ENCODE measurements at regions of chr3 and their contacts with region 1.

Region 1: GRCh38 chr3:185332026-185332735 is 30.8 kb upstream of the MAP3K13 start:
- DNase-seq: no peak
- H3K4me3 Mint-ChIP-seq: peak overlapping the region; percentile 73
- H3K27ac Mint-ChIP-seq: peak overlapping the region; percentile 95
- H3K4me1 Mint-ChIP-seq: peaks cover 77% of the 10 kb centered on the region
- H3K27me3 Mint-ChIP-seq: no peaks in the 10 kb centered on the region
- CTCF ChIP-seq: no peak

Region 2: GRCh38 chr3:185316738-185317407 is 15.3 kb before region 1 on chr3:
- CTCF ChIA-PET with region 1: interaction called, 7 read pairs
- intact Hi-C with region 1: loop called (anchors 1 kb)
- DNase-seq: peak; percentile 62
- H3K4me3 Mint-ChIP-seq: peak overlapping the region; percentile 40
- H3K27ac Mint-ChIP-seq: peak overlapping the region; percentile 93
- H3K4me1 Mint-ChIP-seq: peaks cover 58% of the 10 kb centered on the region
- H3K27me3 Mint-ChIP-seq: no peaks in the 10 kb centered on the region
- CTCF ChIP-seq: no peak

Region 3: DNA sequence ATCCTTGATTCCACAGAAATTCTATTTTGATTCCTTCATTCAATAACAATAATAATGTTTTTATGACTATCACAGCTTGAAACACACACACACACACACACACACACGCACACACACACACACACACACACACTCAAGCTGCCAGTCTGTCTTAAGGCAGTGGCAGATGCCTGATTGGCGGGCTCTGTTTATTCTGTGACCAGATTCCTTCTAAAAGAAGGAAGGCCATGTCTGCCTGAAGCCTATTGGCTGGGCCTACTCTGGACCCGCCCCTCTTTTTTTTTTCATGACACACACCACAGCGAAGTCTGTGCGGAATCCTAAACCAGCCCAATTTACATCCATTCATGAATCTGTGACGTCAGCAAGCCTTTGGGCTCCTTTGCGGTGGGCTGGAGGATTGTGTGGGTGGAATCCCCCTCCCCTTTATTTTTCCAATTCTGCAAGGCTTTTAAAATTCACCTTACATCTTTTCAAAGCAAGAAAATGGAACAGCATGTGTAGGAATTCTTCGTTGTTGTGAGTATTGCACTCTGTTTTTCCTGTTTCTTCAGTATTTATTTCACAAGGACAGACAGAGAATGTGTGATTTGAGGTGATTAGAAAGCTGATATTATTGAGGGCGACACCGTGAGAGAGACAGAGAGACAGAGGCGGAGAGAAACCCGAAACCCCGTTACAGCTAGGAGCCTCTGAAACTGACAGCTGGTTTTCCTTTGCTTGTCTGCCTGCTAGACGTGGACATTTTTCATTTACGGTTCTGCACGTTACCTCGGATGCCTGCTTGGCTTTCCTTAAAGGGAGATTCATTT is 30.9 kb after region 1 on chr3 and contains the start of gene MAP3K13:
- CTCF ChIA-PET with region 1: interaction called, 11 read pairs
- intact Hi-C with region 1: no loop called
- DNase-seq: peak; percentile 33
- H3K4me3 Mint-ChIP-seq: peak within 1 kb of the TSS; percentile 42
- H3K27ac Mint-ChIP-seq: peak within 1 kb of the TSS; percentile 55
- H3K4me1 Mint-ChIP-seq: peaks cover 51% of the 10 kb centered on the region
- H3K27me3 Mint-ChIP-seq: no peaks in the 10 kb centered on the region
- CTCF ChIP-seq: no peak
- total RNA-seq, gene MAP3K13: 102 and 114 TPM in 2 replicates

Region 4: DNA sequence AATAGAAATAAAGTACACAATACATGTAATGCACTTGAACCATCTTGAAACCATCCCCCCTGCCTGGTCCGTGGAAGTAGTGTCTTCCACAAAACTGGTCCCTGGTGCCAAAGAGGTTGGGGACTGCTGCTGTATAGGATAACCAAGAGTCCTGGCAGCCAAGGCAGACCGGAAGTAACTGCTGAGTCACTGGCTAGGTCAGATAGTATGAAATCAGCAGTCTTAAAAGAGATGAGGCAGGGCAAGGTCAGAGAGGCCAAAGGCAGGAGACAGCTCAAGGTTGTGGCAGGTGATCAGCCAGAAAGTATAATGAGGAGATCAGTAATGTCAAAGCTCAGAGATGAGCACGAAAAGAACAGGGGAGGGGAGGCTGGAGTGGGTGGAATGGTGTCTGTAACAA is 91.0 kb after region 1 on chr3:
- CTCF ChIA-PET with region 1: no interaction called
- intact Hi-C with region 1: loop called (anchors 5 kb)
- DNase-seq: peak; percentile 38
- H3K4me3 Mint-ChIP-seq: no peak overlapping the region
- H3K27ac Mint-ChIP-seq: peak overlapping the region; percentile 11
- H3K4me1 Mint-ChIP-seq: peaks cover 66% of the 10 kb centered on the region
- H3K27me3 Mint-ChIP-seq: no peaks in the 10 kb centered on the region
- CTCF ChIP-seq: no peak